CD4-positive, alpha-beta T cell (primary cell): ENCODE measurements at regions of chr4 and their contacts with region 1.

Region 1: DNA sequence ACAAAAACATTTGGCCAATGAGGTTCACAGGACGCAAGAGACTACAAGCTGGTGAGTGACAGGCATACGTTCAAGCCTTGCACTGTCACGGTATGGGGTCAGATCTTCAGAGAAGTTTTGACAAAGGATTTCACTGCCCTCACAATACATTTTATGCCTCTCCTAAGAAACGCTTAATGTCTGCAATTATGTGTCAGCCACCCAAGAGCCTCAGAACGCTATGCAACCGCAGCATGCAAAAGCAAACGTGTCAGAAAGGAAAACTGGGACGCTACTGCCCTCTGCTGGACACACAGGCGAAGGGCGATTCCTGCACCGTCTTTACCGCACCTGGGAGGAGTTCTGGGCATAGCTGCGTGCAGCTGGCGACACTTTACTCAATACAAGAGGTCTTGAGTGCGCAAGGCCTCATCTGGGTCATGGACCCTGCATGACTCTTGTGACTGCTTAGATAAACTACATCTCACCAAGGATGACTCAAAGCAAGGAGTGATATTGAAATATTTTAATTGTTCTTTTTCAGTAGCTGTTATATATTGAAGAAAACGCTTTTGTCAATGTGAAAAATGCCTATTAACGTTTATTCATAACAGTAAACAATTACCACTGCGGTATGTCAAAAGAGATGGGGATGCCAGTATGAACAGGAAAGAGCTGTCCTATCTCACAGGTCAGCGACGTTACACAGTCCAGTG is 147.6 kb upstream of the FRG1 start:
- DNase-seq: peak; percentile 2 to 67 (median 25)
- ATAC-seq: peak; percentile 55
- H3K4me3 ChIP-seq: no peak overlapping the region
- H3K4me3 Mint-ChIP-seq: no peak overlapping the region
- H3K27ac ChIP-seq: no peak overlapping the region
- H3K27ac Mint-ChIP-seq: no peak overlapping the region
- H3K4me1 ChIP-seq: no peaks in the 10 kb centered on the region
- H3K4me1 Mint-ChIP-seq: peaks cover 8% of the 10 kb centered on the region
- H3K27me3 ChIP-seq: no peaks in the 10 kb centered on the region
- H3K27me3 Mint-ChIP-seq: peaks cover 9% of the 10 kb centered on the region
- CTCF ChIP-seq: peak; percentile 63

Region 2: DNA sequence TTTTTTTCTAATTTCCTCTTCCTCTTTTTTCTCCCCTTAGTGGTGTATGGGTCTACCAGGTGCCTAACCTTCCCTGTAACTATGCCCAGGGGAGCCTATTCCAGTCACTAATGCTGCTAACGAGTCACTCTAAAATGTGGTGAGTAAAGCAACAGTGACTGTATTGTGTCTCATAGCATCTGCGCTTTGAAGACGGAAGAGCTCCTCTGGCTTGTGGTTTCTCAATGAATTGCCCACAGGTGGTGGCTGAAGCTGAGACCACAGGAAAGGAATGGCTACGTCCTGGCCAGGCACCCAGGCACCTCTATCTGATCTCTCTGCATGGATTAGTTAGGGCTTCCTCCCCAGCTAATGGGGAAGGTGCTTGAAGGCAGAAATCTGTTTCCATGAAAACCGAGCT is 615.9 kb before region 1 on chr4:
- CTCF ChIA-PET with region 1: no interaction called
- POLR2A ChIA-PET with region 1: no interaction called
- intact Hi-C with region 1: loop called in 1 of 2 experiments (anchors 5 kb)
- DNase-seq: no peak
- ATAC-seq: no peak
- H3K4me3 ChIP-seq: no peak overlapping the region
- H3K4me3 Mint-ChIP-seq: no peak overlapping the region
- H3K27ac ChIP-seq: no peak overlapping the region
- H3K27ac Mint-ChIP-seq: no peak overlapping the region
- H3K4me1 ChIP-seq: no peaks in the 10 kb centered on the region
- H3K4me1 Mint-ChIP-seq: no peaks in the 10 kb centered on the region
- H3K27me3 ChIP-seq: no peaks in the 10 kb centered on the region
- H3K27me3 Mint-ChIP-seq: no peaks in the 10 kb centered on the region
- CTCF ChIP-seq: no peak